ENCODE measurements at regions of chr13 and their contacts with region 1.

Region 1: GRCh38 chr13:27826379-27827353 is 34.4 kb downstream of the GSX1 start:
- DNase-seq: peak; percentile 90
- H3K4me3 Mint-ChIP-seq: peak overlapping the region; percentile 3
- H3K27ac Mint-ChIP-seq: no peak overlapping the region
- H3K4me1 Mint-ChIP-seq: peaks cover 8% of the 10 kb centered on the region
- H3K27me3 Mint-ChIP-seq: peaks cover 76% of the 10 kb centered on the region

Region 2: GRCh38 chr13:26985285-26985878 is 841.3 kb before region 1 on chr13:
- intact Hi-C with region 1: loop called (anchors 5 kb)
- DNase-seq: peak; percentile 92
- H3K4me3 Mint-ChIP-seq: no peak overlapping the region
- H3K27ac Mint-ChIP-seq: no peak overlapping the region
- H3K4me1 Mint-ChIP-seq: peaks cover 9% of the 10 kb centered on the region
- H3K27me3 Mint-ChIP-seq: peaks cover 4% of the 10 kb centered on the region

Region 3: DNA sequence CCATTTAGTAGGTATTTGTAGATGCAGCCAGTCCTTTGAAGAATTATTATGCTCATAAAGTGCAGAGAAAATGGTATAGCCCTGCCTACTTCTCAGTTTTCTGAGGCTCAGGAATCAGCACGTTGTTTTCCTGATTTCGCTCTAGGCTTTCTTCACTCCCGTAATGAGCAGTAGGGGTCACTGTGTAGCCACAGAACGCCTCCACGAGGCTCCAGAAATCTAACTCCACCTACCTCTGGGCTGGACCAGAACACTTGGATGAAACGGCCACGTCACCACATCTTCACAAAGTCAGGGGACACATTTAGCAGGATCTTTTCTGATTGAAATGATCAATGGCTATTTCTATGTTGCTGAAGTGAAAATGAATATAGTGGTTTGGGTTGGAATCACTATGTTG is 452.0 kb before region 1 on chr13:
- intact Hi-C with region 1: loop called (anchors 1 kb)
- DNase-seq: peak; percentile 87
- H3K4me3 Mint-ChIP-seq: no peak overlapping the region
- H3K27ac Mint-ChIP-seq: no peak overlapping the region
- H3K4me1 Mint-ChIP-seq: peaks cover 13% of the 10 kb centered on the region
- H3K27me3 Mint-ChIP-seq: peaks cover 13% of the 10 kb centered on the region

Region 4: DNA sequence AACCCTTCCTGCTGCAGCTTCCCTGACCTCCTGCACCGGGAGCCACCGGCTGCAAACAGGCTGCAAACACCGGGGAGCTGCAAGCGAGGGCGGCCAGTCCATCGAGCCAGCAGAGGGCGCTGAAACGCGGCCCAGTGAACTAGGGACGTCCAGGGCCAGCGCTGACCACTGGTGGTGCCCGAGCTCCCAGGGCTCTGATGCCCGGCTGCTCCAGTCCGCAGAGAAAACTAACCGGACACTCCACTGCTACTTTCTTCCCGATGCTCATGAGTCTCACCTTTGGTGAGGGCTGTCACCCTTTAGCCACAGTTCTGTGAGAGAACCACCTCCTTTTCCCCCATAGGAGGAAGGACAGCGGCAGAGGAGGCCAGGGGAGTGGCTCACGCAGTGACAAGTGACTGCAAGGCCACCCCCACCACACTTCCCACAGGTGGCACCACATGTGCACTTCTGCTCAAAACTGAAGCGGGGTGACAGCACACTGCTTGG is 293.5 kb before region 1 on chr13:
- intact Hi-C with region 1: loop called (anchors 2 kb)
- DNase-seq: peak; percentile 85
- H3K4me3 Mint-ChIP-seq: no peak overlapping the region
- H3K27ac Mint-ChIP-seq: no peak overlapping the region
- H3K4me1 Mint-ChIP-seq: peaks cover 1% of the 10 kb centered on the region
- H3K27me3 Mint-ChIP-seq: peaks cover 16% of the 10 kb centered on the region

Region 5: DNA sequence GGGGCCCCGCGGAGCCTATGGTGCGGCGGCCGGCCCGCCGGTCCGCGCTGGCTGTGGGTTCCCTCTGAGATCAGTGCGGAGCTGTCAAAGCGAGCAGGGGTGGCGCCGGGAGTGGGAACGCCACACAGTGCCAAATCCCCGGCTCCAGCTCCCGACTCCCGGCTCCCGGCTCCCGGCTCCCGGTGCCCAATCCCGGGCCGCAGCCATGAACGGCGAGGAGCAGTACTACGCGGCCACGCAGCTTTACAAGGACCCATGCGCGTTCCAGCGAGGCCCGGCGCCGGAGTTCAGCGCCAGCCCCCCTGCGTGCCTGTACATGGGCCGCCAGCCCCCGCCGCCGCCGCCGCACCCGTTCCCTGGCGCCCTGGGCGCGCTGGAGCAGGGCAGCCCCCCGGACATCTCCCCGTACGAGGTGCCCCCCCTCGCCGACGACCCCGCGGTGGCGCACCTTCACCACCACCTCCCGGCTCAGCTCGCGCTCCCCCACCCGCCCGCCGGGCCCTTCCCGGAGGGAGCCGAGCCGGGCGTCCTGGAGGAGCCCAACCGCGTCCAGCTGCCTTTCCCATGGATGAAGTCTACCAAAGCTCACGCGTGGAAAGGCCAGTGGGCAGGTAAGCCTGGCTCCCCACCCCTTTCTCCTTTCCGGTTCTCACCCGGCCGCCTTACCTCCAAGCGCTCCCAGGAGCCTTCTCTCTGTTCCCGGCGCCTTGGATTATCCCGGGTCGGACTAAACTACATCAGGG is 93.4 kb after region 1 on chr13 and contains the start of gene PDX1:
- intact Hi-C with region 1: loop called (anchors 10 kb)
- DNase-seq: no peak
- H3K4me3 Mint-ChIP-seq: peak within 1 kb of the TSS; percentile 67
- H3K27ac Mint-ChIP-seq: peak within 1 kb of the TSS; percentile 72
- H3K4me1 Mint-ChIP-seq: peaks cover 12% of the 10 kb centered on the region
- H3K27me3 Mint-ChIP-seq: peaks cover 77% of the 10 kb centered on the region
- total RNA-seq, gene PDX1: not detected in 2 replicates

Measured in activated CD4-positive, alpha-beta T cell treated with anti-CD3 and anti-CD28 coated beads, Interleukin-2, amount 10 ng/mL, durations not matched to agents 24 days and 14 days (primary cell).